ENCODE measurements at regions of chr5 and their contacts with region 1.

Region 1: DNA sequence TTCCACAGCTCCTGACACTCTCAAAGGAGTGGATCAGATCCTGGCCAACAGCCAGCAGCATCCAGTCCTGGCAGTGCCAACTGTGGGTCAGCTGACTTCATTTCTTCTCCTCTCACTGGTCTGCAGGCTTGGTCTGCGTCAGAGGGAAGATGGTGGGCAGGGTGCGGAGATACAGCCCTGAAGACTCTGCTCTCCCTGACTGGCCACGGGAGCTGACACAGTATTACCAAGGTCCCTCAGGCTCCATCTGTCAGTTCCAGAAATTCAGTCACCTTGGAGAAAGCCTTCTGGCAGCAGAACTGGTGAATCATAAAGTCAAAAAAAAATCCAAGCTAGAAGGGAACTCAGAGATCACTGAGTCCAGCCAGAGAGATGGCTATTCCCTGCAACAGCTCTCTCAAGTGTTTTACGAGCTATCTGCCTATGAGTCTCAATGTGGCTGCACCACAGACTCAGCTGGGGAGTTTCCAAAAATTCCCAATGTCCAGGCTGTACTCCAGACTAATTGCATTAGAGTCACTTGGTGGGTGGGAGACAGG is 28.0 kb downstream of the C1QTNF2 start:
- DNase-seq: no peak
- H3K4me3 ChIP-seq: no peak overlapping the region
- H3K27ac ChIP-seq: no peak overlapping the region
- H3K4me1 ChIP-seq: peaks cover 0 to 9% of the 10 kb centered on the region in 2 experiments; a peak in 3 of 4 replicates
- H3K27me3 ChIP-seq: no peaks in the 10 kb centered on the region
- CTCF ChIP-seq: no peak
- EP300 ChIP-seq: no peak
- RAD21 ChIP-seq: no peak

Region 2: DNA sequence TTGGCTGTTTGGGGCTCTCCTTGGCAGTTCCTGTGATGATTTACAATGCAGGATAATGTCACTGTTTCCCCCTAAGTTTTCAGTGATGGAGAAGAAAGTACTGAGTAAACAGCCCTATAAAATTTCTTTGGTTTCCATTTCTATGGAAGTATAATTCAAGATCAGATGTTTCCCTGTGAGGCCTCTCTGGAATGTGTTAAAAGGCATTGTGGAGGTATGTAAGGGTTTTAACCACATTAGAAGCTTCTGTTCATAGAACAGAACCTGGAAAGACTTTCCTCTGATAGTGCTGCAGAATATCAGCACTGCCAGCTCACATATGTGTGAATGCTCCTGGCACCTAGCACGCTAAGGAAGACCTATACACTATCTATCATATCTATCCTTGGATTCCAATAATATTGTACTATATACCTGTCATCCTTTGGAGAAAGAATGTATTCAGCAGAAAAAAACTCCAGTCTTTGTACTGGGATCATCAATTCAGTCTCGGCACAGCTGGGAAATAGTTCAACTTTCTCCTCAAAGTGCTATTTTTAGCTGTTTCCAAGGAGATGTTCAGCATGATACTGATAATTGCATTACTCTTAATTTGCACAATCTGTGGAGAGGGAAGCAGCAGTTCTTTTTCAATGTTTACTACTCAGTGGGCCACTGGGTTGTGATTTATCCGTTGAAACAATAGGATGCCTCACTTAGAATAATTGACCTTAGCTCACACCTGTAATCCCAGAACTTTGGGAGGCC is 311.7 kb before region 1 on chr5:
- CTCF ChIA-PET with region 1: interaction called, 14 read pairs
- POLR2A ChIA-PET with region 1: no interaction called
- DNase-seq: peak; percentile 6
- H3K4me3 ChIP-seq: no peak overlapping the region
- H3K27ac ChIP-seq: peak overlapping the region; percentile 51 to 67; a peak in 3 of 4 replicates
- H3K4me1 ChIP-seq: peaks cover 7 to 8% of the 10 kb centered on the region in 2 experiments; a peak in 3 of 4 replicates
- H3K27me3 ChIP-seq: no peaks in the 10 kb centered on the region
- CTCF ChIP-seq: no peak
- EP300 ChIP-seq: peak in 1 of 2 experiments; percentile 19; a peak in 1 of 4 replicates
- RAD21 ChIP-seq: no peak

Region 3: DNA sequence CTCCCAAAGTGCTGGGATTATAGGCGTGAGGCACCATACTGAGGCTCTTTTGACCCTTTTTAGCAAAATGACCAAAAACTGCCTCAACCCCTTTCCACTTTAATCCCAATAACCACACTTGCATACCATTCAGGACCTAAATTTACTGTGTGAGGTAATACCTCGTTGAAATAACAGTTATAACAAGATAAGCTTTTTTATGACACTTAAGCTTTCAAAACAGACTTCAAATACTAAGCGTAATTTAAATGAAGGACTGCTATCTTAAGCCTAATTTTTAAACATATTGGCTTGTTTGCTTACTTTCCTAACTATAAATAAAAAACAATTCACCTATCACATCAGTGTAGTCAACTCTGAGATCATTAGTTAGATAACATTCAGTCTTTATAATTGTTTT is 261.0 kb before region 1 on chr5:
- CTCF ChIA-PET with region 1: interaction called, 14 read pairs
- POLR2A ChIA-PET with region 1: no interaction called
- DNase-seq: no peak
- H3K4me3 ChIP-seq: no peak overlapping the region
- H3K27ac ChIP-seq: peak overlapping the region in 1 of 2 experiments; percentile 72; a peak in 1 of 4 replicates
- H3K4me1 ChIP-seq: peaks cover 0 to 29% of the 10 kb centered on the region in 2 experiments; a peak in 3 of 4 replicates
- H3K27me3 ChIP-seq: no peaks in the 10 kb centered on the region
- CTCF ChIP-seq: no peak
- EP300 ChIP-seq: no peak
- RAD21 ChIP-seq: no peak

Region 4: DNA sequence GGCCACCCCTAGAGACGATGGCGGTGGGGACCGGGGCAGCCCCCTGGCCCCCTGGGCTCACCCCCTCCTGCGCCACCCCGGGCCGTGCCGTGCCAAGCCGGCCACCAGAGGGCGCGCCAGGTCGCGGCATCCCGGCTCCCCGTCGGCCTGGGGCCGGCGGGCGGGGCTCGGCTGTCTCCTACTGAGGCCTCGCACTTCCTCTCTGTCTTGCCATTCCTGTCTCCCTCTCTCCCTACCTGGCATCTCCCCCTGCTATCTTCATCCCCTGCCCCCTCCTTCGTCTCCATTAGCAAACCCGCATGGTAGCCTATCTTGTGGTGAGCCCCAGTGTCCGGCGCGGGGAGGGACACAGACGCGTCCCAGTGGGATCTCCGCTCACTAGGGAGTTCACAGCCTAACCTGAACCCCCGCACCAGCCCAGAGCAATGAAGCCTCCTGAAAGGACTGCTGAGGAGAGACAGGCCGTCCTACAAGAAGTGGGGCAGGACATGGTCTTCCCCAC is 143.0 kb before region 1 on chr5:
- CTCF ChIA-PET with region 1: interaction called, 90 read pairs
- POLR2A ChIA-PET with region 1: interaction called, 3 read pairs
- DNase-seq: peak; percentile 97
- H3K4me3 ChIP-seq: peak overlapping the region; percentile 10 to 49; a peak in 3 of 4 replicates
- H3K27ac ChIP-seq: no peak overlapping the region; a peak in 1 of 4 replicates
- H3K4me1 ChIP-seq: peaks cover 0 to 17% of the 10 kb centered on the region in 2 experiments; a peak in 2 of 4 replicates
- H3K27me3 ChIP-seq: no peaks in the 10 kb centered on the region
- CTCF ChIP-seq: peak; percentile 97
- EP300 ChIP-seq: no peak
- RAD21 ChIP-seq: peak; percentile 81

Region 5: GRCh38 chr5:160271396-160271795 is 71.1 kb before region 1 on chr5:
- CTCF ChIA-PET with region 1: interaction called, 11 read pairs
- POLR2A ChIA-PET with region 1: no interaction called
- DNase-seq: peak; percentile 54
- H3K4me3 ChIP-seq: no peak overlapping the region
- H3K27ac ChIP-seq: peak overlapping the region in 1 of 2 experiments; percentile 67; a peak in 2 of 4 replicates
- H3K4me1 ChIP-seq: peaks cover 11 to 33% of the 10 kb centered on the region in 2 experiments; a peak in 3 of 4 replicates
- H3K27me3 ChIP-seq: no peaks in the 10 kb centered on the region
- CTCF ChIP-seq: no peak
- EP300 ChIP-seq: no peak
- RAD21 ChIP-seq: no peak

Region 6: DNA sequence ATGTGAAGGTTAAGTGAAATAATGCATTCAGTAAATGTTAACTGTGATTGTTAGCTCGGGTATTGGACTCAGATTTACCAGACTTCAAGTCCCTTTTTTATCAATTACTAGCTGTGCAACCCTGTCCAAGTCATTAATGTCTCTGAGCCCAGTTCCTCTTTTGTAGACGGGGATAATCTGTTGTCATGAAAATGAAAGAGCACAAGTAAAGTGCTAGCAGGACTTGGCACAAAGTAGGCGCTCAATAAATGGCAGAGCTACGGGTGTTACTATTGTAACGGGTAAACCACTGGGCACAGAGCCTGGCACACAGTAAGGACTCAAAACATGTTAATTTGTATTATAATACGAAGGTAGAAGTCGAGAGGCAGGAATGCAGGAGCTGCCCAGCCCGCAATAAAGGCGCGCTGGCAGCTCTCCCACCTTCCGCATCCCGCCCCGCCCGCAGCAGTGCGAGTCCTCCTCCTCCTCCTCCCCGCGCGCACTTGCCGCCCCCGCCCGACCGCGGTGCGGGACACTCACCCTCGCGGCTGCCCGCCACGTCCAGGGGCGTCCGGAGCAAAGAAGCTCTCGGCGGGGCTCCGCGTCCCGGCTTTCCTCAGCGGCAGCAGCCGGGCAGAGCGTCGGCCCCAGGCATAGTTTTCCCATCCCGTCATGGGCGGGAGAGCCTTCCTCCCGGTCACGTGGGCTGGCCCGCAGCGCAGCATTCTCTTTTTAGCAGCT is 27.7 kb after region 1 on chr5 and contains the start of gene C1QTNF2:
- CTCF ChIA-PET with region 1: interaction called, 16 read pairs
- POLR2A ChIA-PET with region 1: no interaction called
- DNase-seq: peak; percentile 77
- H3K4me3 ChIP-seq: peak within 1 kb of the TSS; percentile 59 to 63
- H3K27ac ChIP-seq: no peak within 1 kb of the TSS
- H3K4me1 ChIP-seq: peaks cover 0 to 10% of the 10 kb centered on the region in 2 experiments; a peak in 1 of 4 replicates
- H3K27me3 ChIP-seq: no peaks in the 10 kb centered on the region; the same call in 1 of the 2 replicates
- CTCF ChIP-seq: no peak
- EP300 ChIP-seq: no peak
- RAD21 ChIP-seq: no peak
- polyA plus RNA-seq, gene C1QTNF2: 0.65 and 0.67 TPM in 2 replicates

Region 7: DNA sequence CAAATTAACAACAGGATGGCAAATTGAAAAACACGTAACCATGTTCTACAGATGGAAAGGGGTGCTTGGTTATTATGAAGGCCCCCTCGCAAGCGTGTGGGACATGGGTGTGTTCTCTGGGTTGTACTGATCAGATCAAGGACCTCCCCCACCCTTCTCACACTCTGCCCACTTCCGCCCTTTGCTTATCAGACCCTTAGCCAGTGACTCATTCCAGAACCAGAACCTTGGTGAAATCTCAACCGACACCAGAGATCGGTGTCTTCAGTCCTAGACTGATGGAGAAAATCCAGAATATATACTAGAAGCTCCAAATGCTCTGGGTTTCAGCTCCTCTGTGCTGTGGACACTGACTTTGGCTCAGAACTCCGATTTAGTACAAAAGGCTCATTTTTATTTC is 144.1 kb after region 1 on chr5:
- CTCF ChIA-PET with region 1: no interaction called
- POLR2A ChIA-PET with region 1: no interaction called
- DNase-seq: no peak
- H3K4me3 ChIP-seq: no peak overlapping the region
- H3K27ac ChIP-seq: no peak overlapping the region
- H3K4me1 ChIP-seq: no peaks in the 10 kb centered on the region
- H3K27me3 ChIP-seq: no peaks in the 10 kb centered on the region
- CTCF ChIP-seq: no peak
- EP300 ChIP-seq: no peak
- RAD21 ChIP-seq: no peak

Measured in SK-N-SH (cell line).